B cell (primary cell): ENCODE measurements at regions of chr6 and their contacts with region 1.

Region 1: DNA sequence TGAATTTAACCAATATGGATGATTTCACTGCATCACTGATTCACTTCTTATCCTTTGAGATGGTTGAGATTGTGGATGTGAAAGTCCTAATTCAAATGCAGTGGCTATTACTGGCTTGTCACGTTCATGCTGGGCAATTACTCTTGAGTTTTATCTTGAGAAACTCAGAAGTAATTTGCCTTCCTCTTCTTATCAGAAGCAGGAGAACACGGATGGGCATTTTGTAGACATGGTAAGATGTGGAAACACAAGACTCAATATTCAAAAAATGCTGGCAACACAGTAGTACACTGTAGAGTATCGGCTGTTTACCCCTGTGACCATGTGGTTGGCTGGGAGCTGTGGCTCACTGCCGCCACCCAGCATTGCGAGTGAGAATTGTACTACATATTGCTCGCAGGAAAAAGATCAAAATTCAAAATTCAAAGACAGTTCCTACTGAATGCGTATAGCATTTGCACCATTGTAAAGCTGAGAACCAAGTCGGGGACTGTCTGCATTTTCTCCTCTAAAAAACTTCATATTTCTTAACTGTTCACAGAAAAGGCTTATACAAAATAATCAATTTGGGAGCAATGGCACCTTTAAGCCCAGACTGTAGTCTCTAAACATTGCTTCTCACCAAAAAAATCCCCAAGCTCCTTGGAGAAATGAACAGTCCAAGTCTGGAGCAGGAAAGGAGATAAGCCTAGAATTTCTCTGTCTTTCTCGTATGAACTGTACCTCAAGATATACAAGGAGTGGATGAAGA is 61.9 kb upstream of the ELOVL5 start:
- DNase-seq: peak; percentile 77
- ATAC-seq: peak; percentile 98
- H3K4me3 ChIP-seq: peak overlapping the region in 2 of 5 experiments; percentile 7 to 39
- H3K4me3 Mint-ChIP-seq: peak overlapping the region; percentile 74
- H3K27ac ChIP-seq: peak overlapping the region; percentile 7 to 46
- H3K27ac Mint-ChIP-seq: peak overlapping the region; percentile 65
- H3K4me1 ChIP-seq: peaks cover 12 to 15% of the 10 kb centered on the region in 2 donors
- H3K4me1 Mint-ChIP-seq: peaks cover 11% of the 10 kb centered on the region
- H3K27me3 ChIP-seq: no peaks in the 10 kb centered on the region
- H3K27me3 Mint-ChIP-seq: no peaks in the 10 kb centered on the region
- CTCF ChIP-seq: peak; percentile 80

Region 2: DNA sequence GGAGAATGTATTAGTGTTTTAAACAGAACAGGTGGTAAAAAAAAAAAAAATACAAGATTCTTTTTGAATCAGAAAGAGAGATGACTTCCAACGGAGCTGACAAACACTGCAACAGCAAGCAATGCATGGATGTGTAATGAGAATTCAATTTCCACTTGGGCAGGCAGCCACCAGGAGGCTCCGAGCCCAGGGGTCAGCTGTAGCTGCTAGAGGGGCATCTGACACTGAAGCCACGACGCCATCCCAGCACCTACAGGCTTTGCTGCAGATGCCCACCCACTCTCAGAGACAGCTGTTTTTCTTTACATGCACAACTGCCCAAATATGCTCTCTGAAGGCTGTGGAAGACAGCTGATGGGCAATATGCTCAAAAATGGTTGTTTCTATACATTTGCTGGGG is 137.3 kb before region 1 on chr6:
- CTCF ChIA-PET with region 1: interaction called, 20 read pairs
- POLR2A ChIA-PET with region 1: no interaction called
- intact Hi-C with region 1: no loop called
- DNase-seq: no peak
- ATAC-seq: no peak
- H3K4me3 ChIP-seq: no peak overlapping the region
- H3K4me3 Mint-ChIP-seq: no peak overlapping the region
- H3K27ac ChIP-seq: peak overlapping the region in 1 of 2 donors; percentile 13
- H3K27ac Mint-ChIP-seq: peak overlapping the region; percentile 2
- H3K4me1 ChIP-seq: peaks cover 2 to 4% of the 10 kb centered on the region in 2 donors
- H3K4me1 Mint-ChIP-seq: peaks cover 38% of the 10 kb centered on the region
- H3K27me3 ChIP-seq: no peaks in the 10 kb centered on the region
- H3K27me3 Mint-ChIP-seq: no peaks in the 10 kb centered on the region
- CTCF ChIP-seq: no peak

Region 3: GRCh38 chr6:53294095-53294494 is 116.6 kb before region 1 on chr6:
- CTCF ChIA-PET with region 1: interaction called, 38 read pairs
- POLR2A ChIA-PET with region 1: interaction called, 3 read pairs
- intact Hi-C with region 1: loop called (anchors 1 kb)
- DNase-seq: peak; percentile 60
- ATAC-seq: peak; percentile 39
- H3K4me3 ChIP-seq: no peak overlapping the region
- H3K4me3 Mint-ChIP-seq: no peak overlapping the region
- H3K27ac ChIP-seq: peak overlapping the region; percentile 37 to 81
- H3K27ac Mint-ChIP-seq: peak overlapping the region; percentile 90
- H3K4me1 ChIP-seq: peaks cover 86 to 93% of the 10 kb centered on the region in 2 donors
- H3K4me1 Mint-ChIP-seq: peaks cover 87% of the 10 kb centered on the region
- H3K27me3 ChIP-seq: no peaks in the 10 kb centered on the region
- H3K27me3 Mint-ChIP-seq: no peaks in the 10 kb centered on the region
- CTCF ChIP-seq: peak; percentile 83

Region 4: DNA sequence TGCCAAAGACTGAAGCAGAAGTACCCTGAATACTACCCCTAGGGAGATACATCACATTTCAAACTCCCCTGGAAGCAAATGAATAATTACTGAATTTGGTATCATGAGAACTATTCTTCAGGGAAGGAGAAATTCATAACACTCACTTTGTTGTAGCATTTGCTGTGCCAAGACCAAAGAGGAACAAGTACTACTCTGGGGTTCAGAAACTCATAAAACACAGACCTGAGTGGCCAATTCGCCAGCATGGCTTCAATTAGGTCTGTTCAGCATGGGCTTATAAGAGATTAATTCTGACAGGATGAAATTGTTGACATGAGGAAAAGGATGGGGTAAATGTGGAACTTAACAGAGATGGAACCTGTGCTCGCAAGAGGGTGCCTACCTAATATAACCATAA is 68.5 kb before region 1 on chr6:
- CTCF ChIA-PET with region 1: interaction called, 23 read pairs
- POLR2A ChIA-PET with region 1: no interaction called
- intact Hi-C with region 1: loop called (anchors 1 kb)
- DNase-seq: no peak
- ATAC-seq: peak; percentile 29
- H3K4me3 ChIP-seq: peak overlapping the region in 2 of 5 experiments; percentile 3 to 33
- H3K4me3 Mint-ChIP-seq: peak overlapping the region; percentile 77
- H3K27ac ChIP-seq: peak overlapping the region in 1 of 2 donors; percentile 76
- H3K27ac Mint-ChIP-seq: peak overlapping the region; percentile 89
- H3K4me1 ChIP-seq: peaks cover 88 to 91% of the 10 kb centered on the region in 2 donors
- H3K4me1 Mint-ChIP-seq: peaks cover 94% of the 10 kb centered on the region
- H3K27me3 ChIP-seq: no peaks in the 10 kb centered on the region
- H3K27me3 Mint-ChIP-seq: no peaks in the 10 kb centered on the region
- CTCF ChIP-seq: no peak

Region 5: GRCh38 chr6:53359072-53359842 is 51.4 kb before region 1 on chr6:
- CTCF ChIA-PET with region 1: interaction called, 14 read pairs
- POLR2A ChIA-PET with region 1: interaction called, 9 read pairs
- intact Hi-C with region 1: loop called (anchors 2 kb)
- DNase-seq: peak; percentile 94
- ATAC-seq: peak; percentile 90
- H3K4me3 ChIP-seq: peak overlapping the region; percentile 61 to 81 (median 70)
- H3K4me3 Mint-ChIP-seq: peak overlapping the region; percentile 88
- H3K27ac ChIP-seq: peak overlapping the region; percentile 99 to 100
- H3K27ac Mint-ChIP-seq: peak overlapping the region; percentile 99
- H3K4me1 ChIP-seq: peaks cover 46 to 53% of the 10 kb centered on the region in 2 donors
- H3K4me1 Mint-ChIP-seq: peaks cover 51% of the 10 kb centered on the region
- H3K27me3 ChIP-seq: no peaks in the 10 kb centered on the region
- H3K27me3 Mint-ChIP-seq: no peaks in the 10 kb centered on the region
- CTCF ChIP-seq: no peak

Region 6: GRCh38 chr6:53461041-53461656 is 50.5 kb after region 1 on chr6:
- CTCF ChIA-PET with region 1: interaction called, 15 read pairs
- POLR2A ChIA-PET with region 1: interaction called, 5 read pairs
- intact Hi-C with region 1: no loop called
- DNase-seq: peak; percentile 71
- ATAC-seq: peak; percentile 75
- H3K4me3 ChIP-seq: peak overlapping the region in 3 of 5 experiments; percentile 22 to 45 (median 34)
- H3K4me3 Mint-ChIP-seq: peak overlapping the region; percentile 54
- H3K27ac ChIP-seq: peak overlapping the region; percentile 90 to 93
- H3K27ac Mint-ChIP-seq: peak overlapping the region; percentile 97
- H3K4me1 ChIP-seq: peaks cover 80 to 88% of the 10 kb centered on the region in 2 donors
- H3K4me1 Mint-ChIP-seq: peaks cover 90% of the 10 kb centered on the region
- H3K27me3 ChIP-seq: no peaks in the 10 kb centered on the region
- H3K27me3 Mint-ChIP-seq: no peaks in the 10 kb centered on the region
- CTCF ChIP-seq: no peak